ENCODE measurements at regions of chr5 and their contacts with region 1.

Region 1: GRCh38 chr5:55577353-55578060 is 42.7 kb upstream of the PLPP1 start:
- DNase-seq: peak; percentile 50 to 80
- ATAC-seq: peak; percentile 90 to 96 (median 92)
- H3K4me3 ChIP-seq: no peak overlapping the region
- H3K27ac ChIP-seq: peak overlapping the region; percentile 63 to 93 (median 77)
- H3K4me1 ChIP-seq: peaks cover 14 to 56% (median 48%) of the 10 kb centered on the region in 9 donors
- H3K27me3 ChIP-seq: no peaks in the 10 kb centered on the region
- CTCF ChIP-seq: no peak

Region 2: DNA sequence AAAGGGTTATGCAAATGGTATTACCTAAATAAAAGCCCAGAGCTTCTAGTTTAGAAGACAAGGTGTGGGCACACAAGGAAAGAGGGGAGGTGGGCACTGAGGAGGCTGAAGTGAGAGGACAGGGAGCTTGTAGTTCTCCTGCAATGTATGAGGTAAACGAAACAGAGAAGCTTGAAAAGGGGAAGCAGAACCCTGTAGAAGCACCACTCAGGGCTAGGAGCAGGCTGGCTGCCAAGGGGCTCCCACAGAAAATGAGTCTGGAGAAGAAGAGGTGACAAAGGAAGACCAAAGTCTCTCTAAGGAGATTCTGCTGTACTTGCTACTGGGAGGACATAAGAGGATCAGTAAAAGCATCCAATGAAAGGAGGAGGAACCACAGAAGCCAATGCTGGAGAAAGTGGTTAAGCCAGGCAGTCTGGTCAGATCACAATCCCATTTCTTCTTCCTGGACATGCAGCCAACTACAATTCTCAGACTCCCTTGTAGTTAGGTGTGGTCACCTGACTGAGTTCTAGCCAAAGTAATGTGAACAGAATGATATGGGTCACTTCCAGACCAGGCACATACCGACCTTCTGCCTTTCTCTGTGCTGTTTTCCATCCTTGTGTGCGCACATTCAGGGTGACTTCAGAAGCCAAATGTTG is 1063.4 kb after region 1 on chr5:
- intact Hi-C with region 1: loop called in 1 of 10 experiments (anchors 5 kb)
- DNase-seq: peak in 1 of 2 donors; percentile 36
- ATAC-seq: peak in 5 of 8 donors; percentile 27 to 59 (median 49)
- H3K4me3 ChIP-seq: no peak overlapping the region
- H3K27ac ChIP-seq: peak overlapping the region in 1 of 10 donors; percentile 32
- H3K4me1 ChIP-seq: peaks cover 0 to 10% (median 0%) of the 10 kb centered on the region in 9 donors
- H3K27me3 ChIP-seq: no peaks in the 10 kb centered on the region
- CTCF ChIP-seq: no peak

Measured in heart right ventricle (tissue), 16 donors.